Activated CD4-positive, alpha-beta T cell treated with anti-CD3 and anti-CD28 coated beads, Interleukin-2, amount 10 ng/mL, durations not matched to agents 24 days and 14 days (primary cell): ENCODE measurements at regions of chr13 and their contacts with region 1.

Region 1: GRCh38 chr13:99087096-99087953 is 109.5 kb upstream of the DOCK9 start:
- DNase-seq: peak; percentile 98
- H3K4me3 Mint-ChIP-seq: peak overlapping the region; percentile 97
- H3K27ac Mint-ChIP-seq: peak overlapping the region; percentile 99
- H3K4me1 Mint-ChIP-seq: peaks cover 35% of the 10 kb centered on the region
- H3K27me3 Mint-ChIP-seq: peaks cover 1% of the 10 kb centered on the region

Region 2: DNA sequence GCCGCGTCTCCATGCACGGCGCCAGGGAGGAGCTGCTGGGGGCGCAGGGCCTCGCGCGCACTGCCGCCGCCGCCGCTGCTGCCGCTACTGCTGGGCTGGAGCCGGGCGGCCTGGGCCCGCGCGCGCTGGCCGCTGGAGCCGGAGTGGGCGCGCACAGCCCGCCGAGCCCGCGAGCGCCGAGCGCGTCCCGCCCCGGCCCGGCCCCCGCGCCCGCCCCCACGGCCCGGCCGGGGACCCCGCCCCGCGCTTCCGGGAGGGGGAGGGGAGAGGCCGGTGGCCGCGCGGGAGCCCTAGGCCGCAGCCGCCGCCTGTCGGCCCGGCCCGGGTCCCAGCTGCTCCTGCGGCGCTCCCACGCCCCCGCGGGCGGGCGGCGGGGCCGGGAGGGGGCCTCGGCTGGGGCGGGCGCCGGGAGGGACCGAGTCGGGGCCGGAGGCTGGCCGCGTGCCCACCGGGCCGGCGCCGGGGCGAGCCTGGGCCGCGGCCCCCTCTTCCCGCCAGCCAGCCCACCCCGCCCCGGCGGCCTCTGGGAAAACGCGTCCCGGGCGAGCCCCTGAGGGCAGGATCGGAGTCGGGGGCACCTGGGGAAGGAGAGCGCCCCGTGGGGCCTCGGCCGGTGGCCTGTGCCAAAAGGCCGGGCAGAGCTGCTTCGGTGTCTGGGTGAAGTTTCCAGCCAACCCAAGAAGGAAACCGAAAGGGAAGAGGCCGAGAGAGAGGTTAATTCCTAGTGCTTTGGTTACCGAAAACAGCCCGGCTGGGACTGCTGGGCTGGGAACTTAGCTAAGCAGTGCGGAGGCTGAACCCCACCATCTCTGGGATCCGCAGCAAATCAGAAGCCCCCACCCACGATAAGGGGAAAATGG is 510.1 kb before region 1 on chr13 and contains the start of gene STK24:
- intact Hi-C with region 1: loop called (anchors 10 kb)
- DNase-seq: peak; percentile 92
- H3K4me3 Mint-ChIP-seq: peak within 1 kb of the TSS; percentile 98
- H3K27ac Mint-ChIP-seq: peak within 1 kb of the TSS; percentile 94
- H3K4me1 Mint-ChIP-seq: peaks cover 43% of the 10 kb centered on the region
- H3K27me3 Mint-ChIP-seq: no peaks in the 10 kb centered on the region
- total RNA-seq, gene STK24: 127 and 136 TPM in 2 replicates

Region 3: GRCh38 chr13:98977568-98978265 is 109.6 kb before region 1 on chr13 and contains the start of gene DOCK9:
- intact Hi-C with region 1: no loop called
- DNase-seq: no peak
- H3K4me3 Mint-ChIP-seq: no peak within 1 kb of the TSS
- H3K27ac Mint-ChIP-seq: no peak within 1 kb of the TSS
- H3K4me1 Mint-ChIP-seq: peaks cover 43% of the 10 kb centered on the region
- H3K27me3 Mint-ChIP-seq: no peaks in the 10 kb centered on the region
- total RNA-seq, gene DOCK9: 42.2 and 43.5 TPM in 2 replicates

Region 4: DNA sequence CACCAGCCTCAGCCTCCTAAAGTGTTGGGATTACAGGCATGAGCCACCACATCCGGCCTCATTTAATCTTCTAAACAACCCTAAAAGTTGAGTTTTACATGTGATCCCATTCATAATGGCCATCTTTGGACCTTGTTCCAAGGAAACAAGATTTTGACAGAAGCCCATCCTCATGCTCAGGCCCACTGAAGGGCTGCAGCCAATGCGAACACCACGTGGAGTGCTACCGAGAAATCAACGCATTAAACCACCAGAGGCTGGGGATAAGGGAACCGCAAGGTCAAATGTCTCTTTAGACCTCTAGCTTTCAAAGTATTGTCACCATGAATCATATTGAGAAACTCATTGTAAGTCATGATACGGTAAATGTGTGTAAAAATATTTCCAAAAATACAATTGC is 60.1 kb before region 1 on chr13:
- intact Hi-C with region 1: loop called (anchors 2 kb)
- DNase-seq: peak; percentile 70
- H3K4me3 Mint-ChIP-seq: peak overlapping the region; percentile 65
- H3K27ac Mint-ChIP-seq: peak overlapping the region; percentile 95
- H3K4me1 Mint-ChIP-seq: peaks cover 63% of the 10 kb centered on the region
- H3K27me3 Mint-ChIP-seq: no peaks in the 10 kb centered on the region

Region 5: DNA sequence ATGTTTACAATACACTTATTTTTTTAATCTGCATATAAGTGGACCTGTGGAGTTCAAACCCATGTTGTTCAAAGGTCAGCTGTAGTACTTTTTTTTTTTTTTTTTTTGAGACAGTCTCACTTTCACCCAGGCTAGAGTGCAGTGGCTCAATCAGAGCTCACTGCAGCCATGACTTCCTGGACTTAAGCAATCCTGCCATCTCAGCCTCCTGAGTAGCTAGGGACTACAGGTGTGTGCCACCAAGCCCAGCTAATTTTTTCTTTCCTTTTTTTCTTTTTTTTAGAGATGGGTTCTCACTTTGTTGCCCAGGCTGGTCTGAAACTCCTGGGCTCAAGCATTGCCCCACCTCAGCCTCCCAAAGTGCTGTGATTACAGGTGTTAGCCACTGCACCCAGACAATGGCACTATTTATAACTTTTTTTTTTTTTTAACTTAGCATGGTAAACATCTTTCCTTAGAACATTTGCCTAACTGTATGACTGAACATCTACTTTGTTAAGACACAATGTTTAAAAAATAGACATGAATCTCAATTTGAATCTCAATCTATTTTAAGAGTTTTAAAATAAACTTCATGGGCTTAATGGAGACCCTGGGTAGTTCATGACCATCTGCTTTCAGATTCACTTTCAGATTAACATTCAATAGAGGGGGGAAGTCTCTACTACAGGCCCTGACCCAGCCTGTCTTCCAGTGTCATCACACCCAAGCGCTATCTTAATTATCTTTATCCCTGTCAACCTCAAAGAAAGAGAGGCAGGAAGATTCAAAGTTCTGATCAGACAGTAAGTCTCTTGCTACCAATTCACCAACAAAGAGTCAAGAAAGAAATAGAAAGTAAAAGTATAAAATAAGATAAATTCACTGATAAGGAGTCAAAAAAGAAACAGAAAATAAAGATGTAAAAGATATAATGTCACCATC is 11.8 kb before region 1 on chr13:
- intact Hi-C with region 1: loop called (anchors 1 kb)
- DNase-seq: peak; percentile 82
- H3K4me3 Mint-ChIP-seq: peak overlapping the region; percentile 75
- H3K27ac Mint-ChIP-seq: peak overlapping the region; percentile 95
- H3K4me1 Mint-ChIP-seq: peaks cover 59% of the 10 kb centered on the region
- H3K27me3 Mint-ChIP-seq: no peaks in the 10 kb centered on the region

Region 6: DNA sequence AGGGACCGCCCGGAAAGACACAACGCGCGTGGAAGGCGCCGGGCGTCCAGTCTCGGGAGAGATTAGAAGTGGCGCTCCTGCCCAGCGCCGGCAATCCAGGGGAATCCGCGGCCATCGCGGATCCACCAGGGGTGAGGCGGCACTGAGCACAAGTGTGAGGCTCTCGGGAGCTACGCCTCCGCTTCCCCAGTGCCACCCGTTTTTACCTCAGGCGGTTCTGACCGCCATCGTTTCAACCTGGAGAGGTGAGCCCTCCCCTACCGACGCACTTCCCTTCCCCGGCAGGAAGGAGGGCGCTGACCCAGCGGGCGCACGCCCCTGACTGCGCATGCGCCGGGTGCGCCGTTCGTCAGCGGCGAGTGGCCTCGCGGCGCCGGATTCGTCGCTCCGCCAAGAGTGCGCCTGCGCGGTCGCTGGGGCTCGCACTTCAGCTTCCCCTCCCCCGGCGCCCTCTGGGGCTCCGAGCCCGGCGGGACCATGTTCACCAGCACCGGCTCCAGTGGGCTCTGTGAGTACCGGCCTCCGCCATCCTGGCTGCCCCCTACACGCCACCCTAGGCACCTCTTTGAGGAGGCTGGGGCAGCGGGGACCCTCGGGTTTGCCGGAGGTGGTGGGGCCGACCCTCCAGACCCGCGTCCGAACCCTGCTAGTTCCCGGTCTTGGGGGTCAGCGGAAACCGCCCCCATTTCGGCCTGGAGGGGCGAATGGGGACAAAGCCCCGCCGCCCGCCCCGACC is 113.3 kb after region 1 on chr13 and contains the start of gene UBAC2:
- intact Hi-C with region 1: loop called (anchors 2 kb)
- DNase-seq: peak; percentile 99
- H3K4me3 Mint-ChIP-seq: peak within 1 kb of the TSS; percentile 97
- H3K27ac Mint-ChIP-seq: peak within 1 kb of the TSS; percentile 97
- H3K4me1 Mint-ChIP-seq: peaks cover 46% of the 10 kb centered on the region
- H3K27me3 Mint-ChIP-seq: no peaks in the 10 kb centered on the region
- total RNA-seq, gene UBAC2: 52.6 and 52.8 TPM in 2 replicates

Region 7: GRCh38 chr13:99322297-99323103 is 235.2 kb after region 1 on chr13:
- intact Hi-C with region 1: loop called (anchors 2 kb)
- DNase-seq: peak; percentile 81
- H3K4me3 Mint-ChIP-seq: peak overlapping the region; percentile 63
- H3K27ac Mint-ChIP-seq: peak overlapping the region; percentile 98
- H3K4me1 Mint-ChIP-seq: peaks cover 59% of the 10 kb centered on the region
- H3K27me3 Mint-ChIP-seq: no peaks in the 10 kb centered on the region

Region 8: GRCh38 chr13:99335603-99336002 is 248.3 kb after region 1 on chr13:
- intact Hi-C with region 1: no loop called
- DNase-seq: no peak
- H3K4me3 Mint-ChIP-seq: no peak overlapping the region
- H3K27ac Mint-ChIP-seq: no peak overlapping the region
- H3K4me1 Mint-ChIP-seq: peaks cover 41% of the 10 kb centered on the region
- H3K27me3 Mint-ChIP-seq: no peaks in the 10 kb centered on the region

Region 9: GRCh38 chr13:99501184-99501847 is 414.0 kb after region 1 on chr13 and contains the start of gene TM9SF2:
- intact Hi-C with region 1: loop called (anchors 2 kb)
- DNase-seq: peak; percentile 99
- H3K4me3 Mint-ChIP-seq: peak within 1 kb of the TSS; percentile 94
- H3K27ac Mint-ChIP-seq: peak within 1 kb of the TSS; percentile 96
- H3K4me1 Mint-ChIP-seq: peaks cover 60% of the 10 kb centered on the region
- H3K27me3 Mint-ChIP-seq: no peaks in the 10 kb centered on the region
- total RNA-seq, gene TM9SF2: 57.8 and 60.2 TPM in 2 replicates

Region 10: GRCh38 chr13:99687723-99688397 is 600.5 kb after region 1 on chr13:
- intact Hi-C with region 1: no loop called
- DNase-seq: no peak
- H3K4me3 Mint-ChIP-seq: no peak overlapping the region
- H3K27ac Mint-ChIP-seq: no peak overlapping the region
- H3K4me1 Mint-ChIP-seq: no peaks in the 10 kb centered on the region
- H3K27me3 Mint-ChIP-seq: peaks cover 11% of the 10 kb centered on the region

Region 11: GRCh38 chr13:101082481-101082880 is 1995.2 kb after region 1 on chr13:
- intact Hi-C with region 1: no loop called
- DNase-seq: no peak
- H3K4me3 Mint-ChIP-seq: no peak overlapping the region
- H3K27ac Mint-ChIP-seq: no peak overlapping the region
- H3K4me1 Mint-ChIP-seq: no peaks in the 10 kb centered on the region
- H3K27me3 Mint-ChIP-seq: no peaks in the 10 kb centered on the region